Thyroid gland (tissue), 4 donors: ENCODE measurements at regions of chr5 and their contacts with region 1.

Region 1: GRCh38 chr5:62783374-62784057 is 204.9 kb downstream of the LRRC70 start:
- DNase-seq: no peak
- H3K4me3 ChIP-seq: no peak overlapping the region
- H3K27ac ChIP-seq: no peak overlapping the region
- H3K4me1 ChIP-seq: no peaks in the 10 kb centered on the region
- H3K27me3 ChIP-seq: no peaks in the 10 kb centered on the region
- CTCF ChIP-seq: no peak
- POLR2A ChIP-seq: no peak

Region 2: GRCh38 chr5:62460578-62460983 is 322.9 kb before region 1 on chr5:
- intact Hi-C with region 1: loop called (anchors 5 kb)
- DNase-seq: no peak
- H3K4me3 ChIP-seq: no peak overlapping the region
- H3K27ac ChIP-seq: no peak overlapping the region
- H3K4me1 ChIP-seq: no peaks in the 10 kb centered on the region
- H3K27me3 ChIP-seq: no peaks in the 10 kb centered on the region
- CTCF ChIP-seq: peak; percentile 44 to 81 (median 72)
- POLR2A ChIP-seq: no peak